Dorsolateral prefrontal cortex (tissue), 120 donors: ENCODE measurements at regions of chr20 and their contacts with region 1.

Region 1: DNA sequence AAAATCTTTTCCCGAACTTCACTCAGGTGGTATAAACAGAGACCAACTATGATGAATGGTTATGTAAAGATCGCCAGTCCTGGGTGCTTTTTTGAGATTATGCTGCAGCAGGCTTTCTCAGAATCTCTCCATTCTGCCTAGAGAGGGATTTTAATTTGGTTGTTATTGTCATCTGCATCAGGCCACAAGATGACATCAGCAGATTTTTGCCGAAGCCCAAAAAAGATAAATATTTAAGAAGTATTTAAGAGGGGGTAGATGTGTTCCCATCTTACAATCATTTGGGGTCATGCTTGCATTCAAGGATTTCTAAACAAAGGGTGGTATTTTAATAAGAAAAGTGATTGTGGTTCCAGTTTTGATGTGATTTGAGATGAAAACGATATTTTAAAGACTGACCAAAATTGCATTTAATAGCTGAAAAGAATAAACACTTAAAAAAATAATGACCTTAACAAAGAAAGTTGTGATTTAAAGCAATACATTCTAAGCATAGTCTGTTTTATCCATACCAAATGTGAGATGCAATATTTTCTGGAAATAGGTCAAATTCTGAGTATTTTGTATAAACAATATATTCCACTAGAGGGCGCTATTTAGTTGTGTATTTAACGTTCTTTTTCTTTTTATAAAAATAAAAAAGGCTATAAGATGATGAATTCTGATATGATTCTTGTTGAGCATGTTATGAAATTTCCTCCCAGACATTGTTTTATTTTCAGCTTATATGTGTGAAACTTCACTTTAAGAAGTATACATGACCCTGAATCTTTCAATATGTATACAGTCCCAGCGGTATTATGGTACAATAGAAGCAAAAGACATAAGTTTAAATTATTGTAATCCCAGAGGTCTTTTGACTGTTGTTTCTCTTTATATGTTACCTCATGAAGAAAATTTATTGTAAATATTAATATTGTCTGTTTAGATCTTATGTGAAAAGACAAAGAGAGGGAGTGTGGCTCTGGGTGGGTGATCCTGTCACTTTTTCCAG is 51.0 kb upstream of the ZFP64 start:
- DNase-seq: no peak
- H3K4me3 ChIP-seq: no peak overlapping the region
- H3K27ac ChIP-seq: peak overlapping the region in 11 of 59 donors; percentile 0 to 57 (median 36)
- H3K27me3 ChIP-seq: peaks cover 0 to 7% (median 0%) of the 10 kb centered on the region in 45 donors
- CTCF ChIP-seq: peak; percentile 55 to 91 (median 78)

Region 2: DNA sequence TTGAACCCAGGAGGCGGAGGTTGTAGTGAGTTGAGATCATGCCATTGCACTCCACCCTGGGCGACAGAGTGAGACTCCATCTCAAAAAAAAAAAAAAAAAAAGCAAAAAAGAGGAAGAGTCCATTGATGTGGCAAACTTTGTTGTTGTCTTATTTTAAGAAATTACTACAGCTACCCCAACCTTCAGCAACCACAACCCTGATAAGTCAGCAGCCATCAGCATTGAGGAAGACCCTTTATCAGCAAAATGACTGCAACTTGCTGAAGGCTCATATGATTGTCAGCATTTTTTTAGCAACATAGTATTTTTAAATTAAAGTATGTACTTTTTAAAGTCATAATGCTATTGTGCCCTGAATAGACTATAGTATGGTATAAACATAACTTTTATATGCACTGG is 99.8 kb before region 1 on chr20:
- intact Hi-C with region 1: no loop called
- DNase-seq: no peak
- H3K4me3 ChIP-seq: no peak overlapping the region
- H3K27ac ChIP-seq: no peak overlapping the region
- H3K27me3 ChIP-seq: no peaks in the 10 kb centered on the region
- CTCF ChIP-seq: no peak

Region 3: DNA sequence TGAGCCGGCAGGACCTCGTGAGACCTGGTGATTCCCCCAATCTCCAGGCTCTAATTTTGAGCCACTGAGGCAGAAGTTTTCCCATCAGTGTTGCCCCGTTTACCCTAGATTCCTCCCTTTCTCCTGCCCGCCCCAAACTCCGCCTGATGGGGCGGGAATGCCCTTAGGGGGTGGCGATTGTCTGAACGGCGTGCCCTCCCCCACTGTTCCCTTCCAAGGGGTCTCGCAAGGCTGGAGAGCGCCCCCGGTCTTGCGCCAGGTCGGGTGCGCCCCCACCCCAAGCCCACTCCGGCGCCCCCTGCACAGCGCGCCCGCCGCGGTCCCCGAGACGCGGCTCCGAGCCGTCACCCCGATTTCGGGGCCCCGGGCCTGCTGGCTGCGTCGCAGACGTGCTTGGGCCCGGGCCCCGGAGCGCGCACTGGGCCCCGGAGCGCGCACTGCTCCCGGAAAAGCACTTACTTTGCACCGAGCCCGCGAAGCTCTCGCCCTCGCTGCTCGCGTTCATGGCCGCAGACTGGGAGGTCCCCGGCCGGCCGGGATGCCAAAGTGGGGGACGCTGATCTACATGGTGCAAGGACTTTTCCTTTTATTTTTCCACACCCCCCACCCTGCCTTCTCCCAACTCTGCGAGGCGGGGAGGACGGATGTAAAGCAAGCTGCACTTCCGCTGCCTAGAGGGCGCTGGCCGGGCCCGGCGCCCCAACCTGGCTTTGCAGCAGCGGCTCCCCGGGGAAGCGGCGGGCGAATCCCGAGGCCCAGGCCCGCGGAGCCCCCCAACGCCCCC is 51.2 kb before region 1 on chr20 and contains the start of gene ZFP64:
- intact Hi-C with region 1: loop called in 1 of 2 experiments (anchors 5 kb)
- DNase-seq: peak; percentile 71 to 90 (median 82)
- H3K4me3 ChIP-seq: peak within 1 kb of the TSS; percentile 64 to 98 (median 87)
- H3K27ac ChIP-seq: peak within 1 kb of the TSS; percentile 57 to 98 (median 92)
- H3K27me3 ChIP-seq: no peaks in the 10 kb centered on the region
- CTCF ChIP-seq: peak; percentile 35 to 77 (median 59)
- total RNA-seq, gene ZFP64: 11.5 to 26.4 (median 17.2) TPM

Region 4: DNA sequence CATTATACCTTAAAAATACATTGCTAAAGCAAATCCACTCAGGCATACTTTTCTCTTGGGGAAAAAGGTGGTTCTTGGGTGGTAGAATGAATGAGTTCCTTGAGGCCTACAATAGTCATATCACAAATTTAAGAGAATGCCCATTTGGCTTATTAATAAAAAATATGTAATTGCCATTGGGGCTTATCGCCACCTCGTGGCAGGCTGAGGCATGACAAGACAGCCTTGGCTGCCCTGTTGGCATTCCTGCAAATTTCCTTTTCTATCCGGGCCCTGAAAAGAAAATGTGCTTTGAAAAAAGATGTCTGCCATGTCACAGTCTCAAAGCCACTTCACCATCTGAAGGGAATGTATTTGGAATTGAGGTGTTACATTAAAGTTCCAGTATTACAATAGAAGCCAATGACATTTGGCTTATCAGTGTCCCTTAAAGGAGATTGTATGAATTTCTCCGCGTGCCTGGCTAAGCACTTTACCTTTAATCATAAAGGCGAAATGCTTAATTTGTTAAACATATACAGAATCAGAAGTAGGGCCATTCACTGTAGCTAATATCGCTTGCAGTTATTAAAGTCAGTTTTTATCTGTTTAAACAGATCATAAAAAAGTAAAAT is 137.3 kb after region 1 on chr20:
- intact Hi-C with region 1: loop called (anchors 5 to 10 kb)
- DNase-seq: peak in 2 of 10 donors; percentile 27 to 29
- H3K4me3 ChIP-seq: no peak overlapping the region
- H3K27ac ChIP-seq: no peak overlapping the region
- H3K27me3 ChIP-seq: peaks cover 0 to under 1% (median 0%) of the 10 kb centered on the region in 45 donors
- CTCF ChIP-seq: peak; percentile 58 to 94 (median 80)